Ovary (tissue), 10 donors: ENCODE measurements at regions of chr1 and their contacts with region 1.

Region 1: DNA sequence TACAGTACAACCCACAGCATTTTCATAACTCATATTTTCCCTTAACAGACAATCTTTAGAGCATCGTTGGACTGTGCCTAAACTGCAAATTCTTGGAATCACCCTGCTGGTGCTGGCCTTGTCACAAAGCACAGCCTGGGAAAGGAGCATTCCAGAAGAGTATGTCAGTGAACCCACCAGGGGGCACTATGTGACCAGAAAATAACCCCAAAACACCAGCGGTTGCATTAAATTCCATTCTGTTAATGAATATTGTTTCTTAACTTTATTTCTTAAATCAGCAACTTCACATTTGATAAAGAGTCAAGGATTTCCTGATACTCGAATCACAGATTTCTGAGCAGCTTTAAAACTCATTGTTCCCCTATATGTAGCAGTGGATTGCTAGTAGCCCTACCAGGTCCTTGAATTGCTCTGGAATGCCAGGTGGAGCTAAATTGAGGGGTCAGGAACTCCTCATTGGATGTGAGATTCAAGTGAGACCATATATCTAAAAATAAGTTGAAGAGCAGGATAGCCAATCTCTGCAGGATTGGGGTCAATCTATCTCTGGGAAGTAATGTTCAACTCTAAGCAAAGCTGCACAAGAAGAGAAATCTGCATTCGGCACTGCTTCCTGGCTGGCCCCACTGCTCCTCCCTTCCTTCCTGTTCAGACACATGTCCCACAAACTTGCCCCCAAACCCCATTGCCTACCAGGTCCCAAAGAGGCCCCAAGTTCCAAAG is 12.7 kb upstream of the RAB4A start:
- DNase-seq: peak; percentile 56 to 74 (median 61)
- H3K4me3 ChIP-seq: no peak overlapping the region
- H3K27ac ChIP-seq: no peak overlapping the region
- H3K4me1 ChIP-seq: no peaks in the 10 kb centered on the region
- H3K27me3 ChIP-seq: no peaks in the 10 kb centered on the region
- CTCF ChIP-seq: peak; percentile 48 to 89 (median 82)
- EP300 ChIP-seq: no peak
- POLR2A ChIP-seq: no peak

Region 2: DNA sequence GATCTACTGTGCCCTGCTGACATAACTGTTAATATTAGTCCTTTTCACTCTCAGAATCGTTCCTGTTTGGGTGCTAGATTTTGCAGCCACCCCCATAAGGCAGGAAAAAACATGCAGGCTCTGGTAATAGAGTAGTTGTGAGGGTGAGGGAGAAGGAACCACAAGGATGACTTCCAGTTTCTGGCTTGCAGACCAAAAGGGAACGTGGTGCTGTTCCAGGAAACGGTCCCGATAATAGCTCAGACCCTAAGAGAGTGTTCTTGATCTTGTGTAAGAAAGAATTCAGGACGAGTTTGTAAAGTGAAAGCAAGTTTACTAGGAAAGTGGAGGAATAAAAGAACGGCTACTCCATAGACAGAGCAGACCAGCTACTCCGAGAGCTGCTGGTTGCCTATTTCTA is 573.6 kb before region 1 on chr1:
- intact Hi-C with region 1: loop called in 1 of 4 experiments (anchors 5 kb)
- DNase-seq: peak in 1 of 5 donors; percentile 33
- H3K4me3 ChIP-seq: no peak overlapping the region
- H3K27ac ChIP-seq: peak overlapping the region in 1 of 2 donors; percentile 24
- H3K4me1 ChIP-seq: no peaks in the 10 kb centered on the region
- H3K27me3 ChIP-seq: no peaks in the 10 kb centered on the region
- CTCF ChIP-seq: no peak
- EP300 ChIP-seq: no peak
- POLR2A ChIP-seq: no peak

Region 3: DNA sequence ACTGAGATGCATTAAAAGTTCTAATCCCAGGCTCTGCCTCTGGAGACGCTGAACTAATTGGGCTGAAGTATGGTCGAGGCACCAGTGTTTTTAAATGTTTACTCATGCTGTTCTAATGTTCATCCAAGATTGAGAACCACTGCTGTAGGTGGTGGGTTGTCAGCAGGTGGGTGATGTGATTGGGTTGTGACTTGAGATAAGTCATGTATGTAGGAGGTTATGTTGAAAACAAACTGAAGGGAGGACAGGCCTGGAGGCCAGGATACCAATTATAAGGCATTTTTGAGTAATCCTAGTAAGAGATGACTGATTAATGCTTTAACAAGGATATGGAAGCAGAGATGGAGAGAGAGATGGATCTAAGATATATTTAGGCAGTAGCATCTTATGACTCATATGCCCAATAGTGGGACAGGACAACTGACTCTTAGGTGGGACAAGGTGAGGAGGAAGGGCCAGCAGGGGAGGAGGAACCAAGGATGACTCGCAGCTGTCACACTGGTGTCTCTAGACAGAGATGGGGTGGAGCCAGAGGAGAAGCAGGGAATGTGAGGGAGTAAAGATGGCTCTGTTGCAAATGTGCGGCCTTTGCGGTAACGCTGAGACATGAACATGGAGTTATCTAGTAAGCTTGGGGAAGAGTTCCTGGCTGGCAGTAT is 42.0 kb after region 1 on chr1:
- intact Hi-C with region 1: no loop called
- DNase-seq: no peak
- H3K4me3 ChIP-seq: no peak overlapping the region
- H3K27ac ChIP-seq: no peak overlapping the region
- H3K4me1 ChIP-seq: peaks cover 2% of the 10 kb centered on the region
- H3K27me3 ChIP-seq: no peaks in the 10 kb centered on the region
- CTCF ChIP-seq: no peak
- EP300 ChIP-seq: no peak
- POLR2A ChIP-seq: no peak

Region 4: GRCh38 chr1:229479660-229480399 is 221.6 kb after region 1 on chr1:
- intact Hi-C with region 1: loop called (anchors 2 to 10 kb)
- DNase-seq: no peak
- H3K4me3 ChIP-seq: no peak overlapping the region
- H3K27ac ChIP-seq: no peak overlapping the region
- H3K4me1 ChIP-seq: no peaks in the 10 kb centered on the region
- H3K27me3 ChIP-seq: no peaks in the 10 kb centered on the region
- CTCF ChIP-seq: no peak
- EP300 ChIP-seq: no peak
- POLR2A ChIP-seq: no peak